ENCODE measurements at regions of chr20 and their contacts with region 1.

Region 1: DNA sequence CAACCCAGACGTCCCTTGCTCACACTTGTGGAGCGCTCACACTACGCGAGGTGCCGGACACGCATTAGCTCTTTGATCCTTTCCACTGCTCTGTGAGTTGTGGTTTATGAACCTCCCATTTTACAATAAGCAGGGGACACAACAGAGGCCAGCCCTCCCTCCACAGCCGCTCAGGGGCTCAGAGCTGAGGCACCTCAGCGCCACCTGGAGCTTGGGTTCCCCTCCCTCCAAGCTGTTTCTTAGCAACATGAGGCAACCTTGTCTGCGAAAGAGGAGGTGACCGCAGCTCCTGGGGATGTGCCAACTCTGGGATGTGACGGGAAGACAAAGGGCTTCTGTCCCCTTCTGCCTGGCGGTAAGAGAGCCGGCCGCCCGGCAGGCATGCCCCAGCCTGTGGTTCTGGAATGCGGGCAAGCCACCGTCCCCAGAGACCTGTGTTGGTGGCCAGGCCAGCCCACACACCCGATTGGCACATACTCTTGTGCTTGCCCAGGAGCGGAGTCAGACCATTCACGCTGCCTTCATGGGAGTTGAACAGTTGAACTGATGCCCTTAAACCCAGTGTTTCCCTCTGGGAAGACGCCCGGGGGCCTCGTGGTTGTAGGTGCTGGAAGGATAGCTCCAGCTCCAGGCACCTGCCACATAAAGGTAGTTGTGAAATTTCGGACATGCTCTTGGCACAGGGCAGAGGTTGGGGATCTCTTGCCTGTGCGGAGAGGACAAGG is 44.5 kb downstream of the RBM38 start:
- DNase-seq: peak; percentile 99
- H3K4me3 Mint-ChIP-seq: peak overlapping the region; percentile 46
- H3K27ac Mint-ChIP-seq: peak overlapping the region; percentile 78
- H3K4me1 Mint-ChIP-seq: peaks cover 50% of the 10 kb centered on the region
- H3K27me3 Mint-ChIP-seq: no peaks in the 10 kb centered on the region
- CTCF ChIP-seq: no peak

Region 2: DNA sequence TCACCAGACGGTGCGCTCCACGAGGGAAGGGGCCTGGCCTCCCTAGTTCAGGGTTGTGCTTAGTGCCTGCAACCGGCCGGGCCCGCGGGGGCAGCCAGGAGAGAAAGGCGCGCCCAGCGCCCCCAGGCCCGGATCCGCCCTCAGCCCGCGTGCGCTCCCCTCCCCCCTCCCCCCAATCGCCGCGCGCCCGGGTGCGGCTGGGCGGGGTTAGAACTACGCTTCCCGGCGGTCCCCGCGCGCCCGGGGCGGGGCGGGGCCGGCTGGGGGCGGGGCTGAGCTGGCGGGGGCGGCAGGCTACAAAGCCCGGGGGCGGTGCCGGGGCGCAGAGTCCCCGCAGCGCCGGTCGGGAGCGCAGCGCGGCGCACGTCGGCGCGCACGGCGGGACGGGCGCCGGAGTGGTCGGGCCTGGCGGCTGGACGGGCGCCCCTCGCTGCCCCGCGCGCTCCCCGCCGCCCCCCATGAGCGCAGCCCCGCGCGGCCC is 44.5 kb before region 1 on chr20 and contains the start of gene RBM38:
- CTCF ChIA-PET with region 1: interaction called, 11 read pairs
- intact Hi-C with region 1: loop called (anchors 5 kb)
- DNase-seq: peak; percentile 86
- H3K4me3 Mint-ChIP-seq: peak within 1 kb of the TSS; percentile 67
- H3K27ac Mint-ChIP-seq: peak within 1 kb of the TSS; percentile 47
- H3K4me1 Mint-ChIP-seq: no peaks in the 10 kb centered on the region
- H3K27me3 Mint-ChIP-seq: no peaks in the 10 kb centered on the region
- CTCF ChIP-seq: no peak
- total RNA-seq, gene RBM38: 29.5 and 32.0 TPM in 2 replicates

Region 3: GRCh38 chr20:57493091-57493615 is 57.5 kb after region 1 on chr20:
- CTCF ChIA-PET with region 1: interaction called, 3 read pairs
- intact Hi-C with region 1: loop called (anchors 5 kb)
- DNase-seq: no peak
- H3K4me3 Mint-ChIP-seq: no peak overlapping the region
- H3K27ac Mint-ChIP-seq: no peak overlapping the region
- H3K4me1 Mint-ChIP-seq: peaks cover 8% of the 10 kb centered on the region
- H3K27me3 Mint-ChIP-seq: peaks cover 89% of the 10 kb centered on the region
- CTCF ChIP-seq: no peak

Region 4: GRCh38 chr20:57594092-57594911 is 158.6 kb after region 1 on chr20:
- CTCF ChIA-PET with region 1: no interaction called
- intact Hi-C with region 1: no loop called
- DNase-seq: peak; percentile 80
- H3K4me3 Mint-ChIP-seq: no peak overlapping the region
- H3K27ac Mint-ChIP-seq: no peak overlapping the region
- H3K4me1 Mint-ChIP-seq: peaks cover 15% of the 10 kb centered on the region
- H3K27me3 Mint-ChIP-seq: peaks cover 47% of the 10 kb centered on the region
- CTCF ChIP-seq: peak; percentile 95

Measured in Calu3 (cell line).